ENCODE measurements at regions of chr2 and their contacts with region 1.

Region 1: DNA sequence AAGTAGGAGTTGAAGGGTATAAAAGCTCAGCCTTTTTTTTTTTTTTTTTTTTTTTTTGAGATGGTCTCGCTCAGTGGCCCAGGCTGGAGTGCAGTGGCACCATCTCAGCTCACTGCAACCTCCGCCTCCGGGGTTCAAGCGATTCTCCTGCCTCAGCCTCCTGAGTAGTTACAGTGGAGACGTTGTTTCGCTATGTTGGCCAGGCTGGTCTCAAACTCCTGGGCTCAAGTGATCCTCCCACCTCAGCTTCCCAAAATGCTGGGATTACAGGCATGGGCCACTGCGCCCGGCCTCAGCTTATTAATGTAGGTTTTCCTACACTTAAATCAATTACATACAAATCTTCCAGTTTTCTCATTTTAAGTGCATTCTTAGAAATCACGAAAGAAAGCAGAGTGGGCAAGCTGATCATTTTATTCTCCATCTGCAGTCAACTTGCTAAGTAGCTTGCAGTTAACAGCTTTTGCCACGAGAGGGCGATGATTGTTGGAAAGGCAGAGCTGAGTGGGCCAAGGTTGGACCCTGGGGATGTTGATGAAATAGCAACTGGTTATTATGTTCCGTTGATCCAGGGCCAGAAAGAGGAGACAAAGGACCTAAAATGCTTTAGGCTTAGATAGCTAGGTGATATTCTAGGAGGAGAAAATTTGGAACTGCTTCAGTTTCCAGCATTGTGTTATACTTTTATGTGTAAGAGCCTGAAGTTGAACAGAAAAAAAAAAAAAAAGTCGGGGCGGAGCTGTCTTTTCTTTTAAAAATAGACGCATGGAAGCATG is 234.4 kb upstream of the EPAS1 start:
- DNase-seq: peak; percentile 69 to 93 (median 81)
- H3K4me3 ChIP-seq: no peak overlapping the region
- H3K27ac ChIP-seq: peak overlapping the region in 1 of 5 donors; percentile 24
- H3K4me1 ChIP-seq: peaks cover 0 to 8% of the 10 kb centered on the region in 2 donors
- H3K27me3 ChIP-seq: no peaks in the 10 kb centered on the region
- CTCF ChIP-seq: peak; percentile 80 to 90 (median 88)
- POLR2A ChIP-seq: no peak

Region 2: DNA sequence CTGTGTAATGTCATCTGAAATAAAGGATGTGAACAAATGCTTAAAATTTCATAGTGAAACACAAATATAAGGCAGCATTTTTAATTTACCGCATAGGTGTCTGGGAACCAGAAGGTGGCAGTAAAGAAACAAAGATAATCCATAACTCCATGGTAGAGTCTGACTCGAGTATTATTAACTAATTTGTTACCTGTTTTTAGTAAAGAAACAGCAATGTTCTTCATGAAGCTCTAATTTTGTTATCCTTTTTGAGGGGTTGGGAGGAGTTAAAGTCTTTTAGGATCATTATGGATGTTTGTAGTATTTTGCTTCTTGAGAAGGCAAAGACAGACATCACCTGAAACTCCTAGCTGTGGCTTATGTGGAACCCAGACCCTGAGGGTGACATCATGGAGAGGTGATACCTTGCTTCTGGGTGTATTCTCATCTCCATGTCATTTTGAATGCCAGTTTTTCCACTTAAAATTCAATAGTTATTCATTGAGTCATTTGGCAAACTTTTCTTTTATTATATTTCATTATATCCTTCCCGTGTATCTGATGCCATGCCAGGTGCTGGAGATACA is 51.8 kb before region 1 on chr2:
- intact Hi-C with region 1: no loop called
- DNase-seq: no peak
- H3K4me3 ChIP-seq: no peak overlapping the region
- H3K27ac ChIP-seq: no peak overlapping the region
- H3K4me1 ChIP-seq: peaks cover 0 to 16% of the 10 kb centered on the region in 2 donors
- H3K27me3 ChIP-seq: no peaks in the 10 kb centered on the region
- CTCF ChIP-seq: peak; percentile 50 to 75 (median 62)
- POLR2A ChIP-seq: no peak

Region 3: DNA sequence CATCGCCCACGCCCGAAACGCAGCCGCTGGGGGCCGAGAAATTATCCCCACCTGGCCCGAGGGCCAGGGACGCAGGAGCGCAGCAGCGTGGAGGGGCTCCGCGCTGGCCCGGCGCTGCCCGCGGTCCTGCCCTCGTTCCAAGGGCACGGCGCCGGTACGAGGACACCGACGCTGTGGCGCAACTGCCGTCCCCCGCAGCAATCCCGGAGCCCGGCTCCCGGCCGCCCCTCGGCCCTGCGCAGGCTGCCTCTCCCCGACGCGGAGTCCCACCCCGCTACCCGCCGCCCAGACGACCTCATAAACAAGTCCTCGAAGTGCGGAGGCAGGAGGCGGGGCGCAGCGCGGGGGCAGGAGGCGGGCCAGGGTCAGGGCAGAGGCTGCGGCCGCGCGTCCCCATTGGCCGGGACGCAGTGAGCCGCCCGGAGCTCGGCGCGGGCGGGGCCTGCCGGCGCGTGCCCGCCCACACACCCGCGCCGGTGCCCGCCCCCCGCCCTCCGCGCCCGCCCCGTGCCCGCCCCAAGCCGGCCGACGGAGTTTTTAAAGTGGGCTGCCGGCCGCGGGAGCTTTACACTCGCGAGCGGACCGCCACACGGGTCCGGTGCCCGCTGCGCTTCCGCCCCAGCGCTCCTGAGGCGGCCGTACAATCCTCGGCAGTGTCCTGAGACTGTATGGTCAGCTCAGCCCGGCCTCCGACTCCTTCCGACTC is 234.2 kb after region 1 on chr2 and contains the start of gene EPAS1:
- intact Hi-C with region 1: loop called in 1 of 2 experiments (anchors 10 kb)
- DNase-seq: peak; percentile 89 to 95 (median 91)
- H3K4me3 ChIP-seq: peak within 1 kb of the TSS; percentile 32 to 83 (median 60)
- H3K27ac ChIP-seq: peak within 1 kb of the TSS; percentile 24 to 90 (median 88)
- H3K4me1 ChIP-seq: peaks cover 0 to 33% of the 10 kb centered on the region in 2 donors
- H3K27me3 ChIP-seq: no peaks in the 10 kb centered on the region
- CTCF ChIP-seq: no peak
- POLR2A ChIP-seq: peak; percentile 67 to 75
- total RNA-seq, gene EPAS1: 25.2 to 307 (median 225) TPM

Region 4: DNA sequence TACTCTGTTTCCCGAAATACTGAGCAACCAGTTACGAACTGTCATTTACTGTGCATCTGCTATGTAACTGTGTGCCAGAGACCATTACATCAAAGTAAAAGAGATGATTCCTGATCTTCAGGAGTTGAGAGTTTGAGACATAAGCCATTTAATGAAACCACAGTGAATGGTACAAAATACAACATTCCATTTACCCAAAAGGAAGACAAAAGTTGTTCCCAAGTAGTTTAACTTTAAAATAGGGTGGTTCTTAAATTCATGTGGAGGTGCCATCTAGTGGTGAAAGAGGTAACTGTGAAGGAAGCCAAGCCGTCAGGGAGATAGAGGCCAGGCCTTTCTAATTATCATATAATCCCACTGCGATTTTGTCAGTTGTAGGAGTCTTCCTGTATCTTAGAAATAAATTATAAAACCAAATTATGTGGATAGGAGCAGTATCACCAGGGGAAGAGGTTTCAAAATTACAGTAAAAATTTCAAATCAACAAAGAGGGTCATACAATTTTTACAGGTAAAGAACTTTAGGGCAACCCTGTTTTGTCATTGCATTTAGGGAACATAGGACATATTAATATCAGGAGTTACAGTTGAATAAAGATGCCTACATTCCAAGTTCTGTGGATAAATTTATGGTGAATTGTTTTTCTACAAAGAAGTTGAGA is 302.1 kb after region 1 on chr2:
- intact Hi-C with region 1: loop called (anchors 5 kb)
- DNase-seq: peak in 5 of 7 donors; percentile 28 to 73 (median 58)
- H3K4me3 ChIP-seq: no peak overlapping the region
- H3K27ac ChIP-seq: no peak overlapping the region
- H3K4me1 ChIP-seq: no peaks in the 10 kb centered on the region
- H3K27me3 ChIP-seq: no peaks in the 10 kb centered on the region
- CTCF ChIP-seq: peak; percentile 68 to 86 (median 80)
- POLR2A ChIP-seq: no peak

Region 5: GRCh38 chr2:46458763-46459500 is 396.1 kb after region 1 on chr2:
- intact Hi-C with region 1: loop called in 1 of 2 experiments (anchors 5 kb)
- DNase-seq: peak in 3 of 7 donors; percentile 18 to 58 (median 20)
- H3K4me3 ChIP-seq: no peak overlapping the region
- H3K27ac ChIP-seq: peak overlapping the region in 2 of 5 donors; percentile 63 to 68
- H3K4me1 ChIP-seq: peaks cover 5 to 14% of the 10 kb centered on the region in 2 donors
- H3K27me3 ChIP-seq: no peaks in the 10 kb centered on the region
- CTCF ChIP-seq: no peak
- POLR2A ChIP-seq: no peak

Measured in adrenal gland (tissue), 19 donors.